Common myeloid progenitor, CD34-positive (primary cell): ENCODE measurements at regions of chr1 and their contacts with region 1.

Region 1: DNA sequence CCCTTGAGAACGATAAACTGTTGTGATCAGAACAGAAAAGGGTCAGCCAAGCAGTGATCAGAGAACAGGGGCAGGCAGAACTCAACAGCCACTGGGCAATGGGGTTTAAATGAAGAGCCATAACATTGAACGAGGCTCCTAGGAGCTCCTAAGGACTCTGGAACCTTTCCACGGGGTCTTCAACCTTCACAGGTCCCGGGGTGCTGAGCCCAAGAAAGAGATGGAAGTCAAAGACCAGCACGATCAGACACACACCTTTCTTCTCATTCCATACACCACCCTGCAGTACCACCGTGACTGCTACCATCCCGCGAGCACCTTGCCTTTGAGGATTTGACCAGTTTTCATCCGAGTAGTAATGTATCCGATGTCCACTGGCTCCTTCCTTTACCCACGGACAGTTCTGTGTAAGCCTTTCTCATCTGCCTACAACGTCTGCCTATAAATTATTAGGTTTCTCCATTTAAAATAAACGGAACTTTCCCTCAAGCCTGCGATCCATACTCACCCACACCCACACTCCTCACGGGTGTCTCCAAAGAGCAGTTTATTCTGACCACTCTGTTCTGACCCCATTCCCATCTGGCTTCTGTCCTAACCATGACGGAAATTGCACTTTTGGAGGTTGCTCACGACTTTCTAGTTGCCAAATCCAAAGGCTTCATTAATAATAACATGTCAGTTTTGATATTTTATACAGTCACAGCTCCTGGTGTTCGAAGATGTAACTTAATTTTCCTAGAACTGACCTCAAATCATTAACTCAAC is 16.8 kb upstream of the HHAT start:
- DNase-seq: no peak
- H3K4me3 ChIP-seq: peak overlapping the region in 4 of 7 experiments; percentile 50 to 80 (median 64)
- H3K27ac ChIP-seq: no peak overlapping the region
- H3K4me1 ChIP-seq: peaks cover 0 to 5% (median 4%) of the 10 kb centered on the region in 4 experiments
- H3K27me3 ChIP-seq: peaks cover 9 to 22% (median 13%) of the 10 kb centered on the region in 5 experiments

Region 2: DNA sequence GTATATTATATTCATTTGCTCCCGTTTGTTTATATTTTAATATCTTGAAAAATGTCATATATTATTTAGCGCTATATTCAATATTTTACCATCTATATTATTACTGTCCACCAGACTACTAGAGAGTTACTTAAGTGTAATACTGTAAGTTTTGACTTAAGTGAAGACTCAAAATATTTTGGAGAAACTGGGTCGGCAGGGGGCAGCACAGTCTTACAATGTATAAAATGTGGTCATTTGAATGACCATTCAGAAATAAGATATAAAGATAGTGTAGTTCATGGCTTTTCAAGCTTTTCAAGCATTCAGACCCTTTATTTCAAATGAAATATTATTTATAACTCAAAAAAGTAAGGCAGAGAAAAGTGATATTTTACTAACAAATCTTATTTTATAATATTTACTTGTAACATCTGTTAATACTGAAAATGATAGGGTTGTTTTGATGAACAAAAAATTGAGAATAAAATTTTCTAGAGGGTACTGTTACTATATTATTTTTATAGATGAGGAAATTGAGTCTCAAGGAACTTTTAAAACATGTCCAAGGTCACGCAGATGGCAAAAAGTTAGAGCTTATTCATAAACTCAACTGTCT is 168.3 kb before region 1 on chr1:
- CTCF ChIA-PET with region 1: interaction called, 17 read pairs
- POLR2A ChIA-PET with region 1: no interaction called
- DNase-seq: peak; percentile 57 to 75 (median 70)
- H3K4me3 ChIP-seq: no peak overlapping the region
- H3K27ac ChIP-seq: no peak overlapping the region
- H3K4me1 ChIP-seq: no peaks in the 10 kb centered on the region
- H3K27me3 ChIP-seq: peaks cover 0 to 7% (median 0%) of the 10 kb centered on the region in 5 experiments

Region 3: DNA sequence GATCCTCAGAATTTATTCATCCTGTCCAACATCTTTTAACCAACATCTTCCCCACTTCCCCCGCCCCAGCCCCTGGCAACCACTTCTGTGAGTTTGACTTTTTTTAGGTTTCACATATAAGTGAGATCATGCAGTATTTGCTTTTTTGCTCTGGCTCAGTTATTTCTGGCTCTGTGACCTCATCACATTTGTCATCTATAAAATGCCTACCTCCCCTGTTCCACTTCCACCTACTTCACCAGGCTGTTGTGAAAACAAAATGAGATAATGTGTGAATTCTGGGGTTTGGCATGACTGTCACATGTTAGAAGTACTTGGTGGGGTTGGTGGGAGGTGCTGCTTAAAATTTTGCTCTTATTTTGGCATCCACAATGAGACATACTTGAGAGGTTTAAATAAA is 35.2 kb after region 1 on chr1:
- CTCF ChIA-PET with region 1: no interaction called
- POLR2A ChIA-PET with region 1: no interaction called
- DNase-seq: peak in 1 of 3 donors; percentile 35
- H3K4me3 ChIP-seq: no peak overlapping the region
- H3K27ac ChIP-seq: no peak overlapping the region
- H3K4me1 ChIP-seq: peaks cover 0 to 16% (median 3%) of the 10 kb centered on the region in 4 experiments
- H3K27me3 ChIP-seq: no peaks in the 10 kb centered on the region

Region 4: GRCh38 chr1:210373885-210374599 is 62.1 kb after region 1 on chr1:
- CTCF ChIA-PET with region 1: no interaction called
- POLR2A ChIA-PET with region 1: no interaction called
- DNase-seq: peak; percentile 39 to 61 (median 53)
- H3K4me3 ChIP-seq: no peak overlapping the region
- H3K27ac ChIP-seq: no peak overlapping the region
- H3K4me1 ChIP-seq: no peaks in the 10 kb centered on the region
- H3K27me3 ChIP-seq: no peaks in the 10 kb centered on the region